WTC11 (cell line): ENCODE measurements at regions of chrX and their contacts with region 1.

Region 1: DNA sequence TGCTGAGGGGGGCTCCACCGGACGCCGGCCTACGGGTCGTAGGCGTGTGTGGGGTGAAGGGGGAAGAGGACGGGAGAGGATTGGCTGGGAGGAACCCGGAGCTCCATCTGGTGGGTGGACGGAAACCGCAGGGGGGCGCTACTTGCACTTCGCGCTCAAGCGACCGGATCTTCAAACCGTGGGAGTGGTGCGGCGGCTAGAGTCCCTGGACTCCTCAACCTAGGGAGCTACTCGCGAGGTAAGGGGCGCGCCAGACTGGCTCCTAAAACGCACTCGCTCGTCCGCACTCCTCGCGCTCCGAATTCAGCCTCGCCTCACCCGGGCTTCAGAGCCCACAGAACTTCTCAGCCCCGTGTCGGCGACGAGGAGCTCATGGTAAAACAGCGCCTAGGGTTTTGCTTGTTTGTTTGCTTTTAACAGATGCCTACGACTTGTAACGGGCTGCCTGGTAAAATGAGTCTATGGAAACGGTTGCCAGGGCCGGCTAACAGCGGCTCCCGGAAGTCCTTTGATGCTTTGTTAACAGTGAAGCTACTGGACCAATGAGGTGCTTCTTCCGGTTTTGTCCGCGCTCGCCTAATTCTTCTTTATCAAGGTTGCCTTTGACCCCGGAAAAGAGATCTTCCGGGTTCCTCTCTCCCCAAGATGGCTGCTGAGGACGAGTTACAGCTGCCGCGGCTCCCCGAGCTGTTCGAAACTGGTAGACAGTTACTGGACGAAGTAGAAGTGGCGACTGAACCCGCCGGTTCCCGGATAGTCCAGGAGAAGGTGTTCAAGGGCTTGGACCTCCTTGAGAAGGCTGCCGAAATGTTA is at the start of gene IGBP1:
- DNase-seq: peak; percentile 81
- ATAC-seq: peak; percentile 92
- H3K4me3 Mint-ChIP-seq: peak within 1 kb of the TSS; percentile 100
- H3K27ac Mint-ChIP-seq: peak within 1 kb of the TSS; percentile 97
- H3K4me1 Mint-ChIP-seq: peaks cover 36% of the 10 kb centered on the region
- H3K27me3 Mint-ChIP-seq: no peaks in the 10 kb centered on the region
- CTCF ChIP-seq: no peak
- total RNA-seq, gene IGBP1: 38.9 to 46.5 TPM (median 45.3 TPM) in 3 replicates

Region 2: GRCh38 chrX:69741721-69742120 is 391.8 kb before region 1 on chrX:
- CTCF ChIA-PET with region 1: no interaction called
- POLR2A ChIA-PET with region 1: no interaction called
- DNase-seq: no peak
- ATAC-seq: no peak
- H3K4me3 Mint-ChIP-seq: no peak overlapping the region
- H3K27ac Mint-ChIP-seq: no peak overlapping the region
- H3K4me1 Mint-ChIP-seq: peaks cover 9% of the 10 kb centered on the region
- H3K27me3 Mint-ChIP-seq: no peaks in the 10 kb centered on the region
- CTCF ChIP-seq: no peak

Region 3: GRCh38 chrX:70105229-70105628 is 28.3 kb before region 1 on chrX:
- CTCF ChIA-PET with region 1: no interaction called
- POLR2A ChIA-PET with region 1: no interaction called
- DNase-seq: no peak
- ATAC-seq: no peak
- H3K4me3 Mint-ChIP-seq: no peak overlapping the region
- H3K27ac Mint-ChIP-seq: no peak overlapping the region
- H3K4me1 Mint-ChIP-seq: no peaks in the 10 kb centered on the region
- H3K27me3 Mint-ChIP-seq: no peaks in the 10 kb centered on the region
- CTCF ChIP-seq: no peak

Region 4: GRCh38 chrX:70168238-70169188 is 35.0 kb after region 1 on chrX:
- CTCF ChIA-PET with region 1: interaction called, 12 read pairs
- POLR2A ChIA-PET with region 1: interaction called, 5 read pairs
- DNase-seq: peak; percentile 10
- ATAC-seq: peak; percentile 58
- H3K4me3 Mint-ChIP-seq: peak overlapping the region; percentile 52
- H3K27ac Mint-ChIP-seq: peak overlapping the region; percentile 68
- H3K4me1 Mint-ChIP-seq: peaks cover 52% of the 10 kb centered on the region
- H3K27me3 Mint-ChIP-seq: no peaks in the 10 kb centered on the region
- CTCF ChIP-seq: no peak

Region 5: GRCh38 chrX:70262952-70263567 is 129.6 kb after region 1 on chrX:
- CTCF ChIA-PET with region 1: interaction called, 11 read pairs
- POLR2A ChIA-PET with region 1: no interaction called
- DNase-seq: peak; percentile 74
- ATAC-seq: peak; percentile 99
- H3K4me3 Mint-ChIP-seq: no peak overlapping the region
- H3K27ac Mint-ChIP-seq: no peak overlapping the region
- H3K4me1 Mint-ChIP-seq: peaks cover 10% of the 10 kb centered on the region; the same call in 1 of the 2 replicates
- H3K27me3 Mint-ChIP-seq: no peaks in the 10 kb centered on the region
- CTCF ChIP-seq: peak; percentile 21; the same call in 1 of the 2 replicates

Region 6: GRCh38 chrX:70411475-70411874 is 278.0 kb after region 1 on chrX:
- CTCF ChIA-PET with region 1: no interaction called
- POLR2A ChIA-PET with region 1: no interaction called
- DNase-seq: no peak
- ATAC-seq: no peak
- H3K4me3 Mint-ChIP-seq: no peak overlapping the region
- H3K27ac Mint-ChIP-seq: no peak overlapping the region
- H3K4me1 Mint-ChIP-seq: no peaks in the 10 kb centered on the region
- H3K27me3 Mint-ChIP-seq: no peaks in the 10 kb centered on the region
- CTCF ChIP-seq: no peak